ENCODE measurements at regions of chr21 and their contacts with region 1.

Region 1: GRCh38 chr21:15729674-15730483 is at the start of gene USP25:
- DNase-seq: peak; percentile 66 to 96 (median 91)

Region 2: DNA sequence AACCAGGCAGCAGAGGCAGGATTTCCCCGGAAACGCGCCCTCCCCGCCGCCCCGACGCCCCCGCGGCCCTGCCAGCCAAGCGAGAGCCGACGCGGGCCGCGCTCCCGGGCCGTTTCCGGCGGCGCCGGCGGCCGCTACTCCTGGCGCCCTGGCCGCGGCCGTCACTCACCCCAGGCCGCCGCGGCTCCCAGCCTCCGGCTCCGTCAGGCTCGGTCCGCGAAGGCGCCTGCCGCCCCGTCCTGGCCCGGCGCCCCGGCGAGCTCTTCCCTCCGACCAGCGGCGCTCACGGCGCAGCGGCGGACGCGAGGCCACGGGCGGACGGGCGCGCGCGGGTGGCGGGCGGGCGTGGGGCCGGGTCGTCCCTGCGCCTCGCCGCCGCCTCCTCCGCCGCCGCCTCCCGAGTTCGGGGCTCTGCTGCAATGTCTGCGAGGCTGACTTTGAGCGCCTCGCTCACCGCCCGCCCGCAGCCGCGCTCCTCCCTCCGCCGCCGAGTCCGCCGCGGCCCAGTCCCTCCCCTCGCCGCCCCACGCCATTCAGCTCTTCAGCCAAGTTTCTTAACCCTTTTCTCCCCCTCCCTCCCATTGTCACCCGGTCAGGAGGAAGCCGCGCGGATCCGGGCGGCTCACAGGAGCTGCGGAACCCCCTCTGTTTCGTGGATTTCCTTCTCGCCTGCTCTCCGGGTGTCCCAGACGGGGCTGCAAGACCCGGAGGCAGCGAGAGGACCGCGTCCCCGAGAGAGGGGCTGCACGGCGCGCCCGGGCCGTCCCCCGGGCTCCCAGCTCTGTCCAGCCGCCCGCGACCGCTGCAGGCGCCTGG is 665.1 kb before region 1 on chr21 and contains the start of gene NRIP1:
- intact Hi-C with region 1: loop called (anchors 10 kb)
- DNase-seq: peak; percentile 63 to 96 (median 88)

Region 3: DNA sequence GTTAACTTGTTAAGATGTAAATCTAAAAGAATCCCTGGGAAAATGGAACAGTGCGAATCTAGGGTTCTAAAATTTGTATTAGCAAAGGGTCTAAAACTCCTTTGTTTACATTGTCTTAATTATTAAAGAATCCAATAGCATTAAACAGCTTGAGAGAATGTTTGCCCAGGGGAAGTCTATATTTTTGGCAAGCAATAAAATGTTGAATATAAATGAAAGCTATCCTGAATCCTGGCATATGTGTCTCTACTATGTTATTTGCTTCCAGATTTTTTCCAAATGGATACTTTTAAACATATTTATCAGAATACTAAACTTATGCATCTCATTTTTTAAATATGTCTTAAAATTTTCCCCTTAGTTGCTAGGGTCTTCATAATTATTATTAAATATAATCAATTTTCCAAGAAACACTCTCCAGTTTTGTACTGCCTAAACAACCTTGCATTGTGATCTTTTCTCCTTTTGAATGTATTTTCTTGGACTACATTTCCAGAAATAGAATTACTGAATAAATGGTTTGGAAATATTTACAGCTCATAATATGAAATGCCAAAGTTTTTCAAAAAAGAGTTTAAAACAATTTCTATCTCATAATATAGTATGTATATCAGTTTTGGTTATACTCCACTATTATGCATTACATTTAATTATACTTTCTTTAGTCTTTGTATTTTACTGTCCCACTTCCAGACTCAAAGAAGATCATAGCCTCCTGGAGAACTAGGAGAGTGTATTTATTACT is 304.7 kb after region 1 on chr21:
- intact Hi-C with region 1: no loop called
- DNase-seq: no peak